AG04449 (cell line): ENCODE measurements at regions of chr17 and their contacts with region 1.

Region 1: DNA sequence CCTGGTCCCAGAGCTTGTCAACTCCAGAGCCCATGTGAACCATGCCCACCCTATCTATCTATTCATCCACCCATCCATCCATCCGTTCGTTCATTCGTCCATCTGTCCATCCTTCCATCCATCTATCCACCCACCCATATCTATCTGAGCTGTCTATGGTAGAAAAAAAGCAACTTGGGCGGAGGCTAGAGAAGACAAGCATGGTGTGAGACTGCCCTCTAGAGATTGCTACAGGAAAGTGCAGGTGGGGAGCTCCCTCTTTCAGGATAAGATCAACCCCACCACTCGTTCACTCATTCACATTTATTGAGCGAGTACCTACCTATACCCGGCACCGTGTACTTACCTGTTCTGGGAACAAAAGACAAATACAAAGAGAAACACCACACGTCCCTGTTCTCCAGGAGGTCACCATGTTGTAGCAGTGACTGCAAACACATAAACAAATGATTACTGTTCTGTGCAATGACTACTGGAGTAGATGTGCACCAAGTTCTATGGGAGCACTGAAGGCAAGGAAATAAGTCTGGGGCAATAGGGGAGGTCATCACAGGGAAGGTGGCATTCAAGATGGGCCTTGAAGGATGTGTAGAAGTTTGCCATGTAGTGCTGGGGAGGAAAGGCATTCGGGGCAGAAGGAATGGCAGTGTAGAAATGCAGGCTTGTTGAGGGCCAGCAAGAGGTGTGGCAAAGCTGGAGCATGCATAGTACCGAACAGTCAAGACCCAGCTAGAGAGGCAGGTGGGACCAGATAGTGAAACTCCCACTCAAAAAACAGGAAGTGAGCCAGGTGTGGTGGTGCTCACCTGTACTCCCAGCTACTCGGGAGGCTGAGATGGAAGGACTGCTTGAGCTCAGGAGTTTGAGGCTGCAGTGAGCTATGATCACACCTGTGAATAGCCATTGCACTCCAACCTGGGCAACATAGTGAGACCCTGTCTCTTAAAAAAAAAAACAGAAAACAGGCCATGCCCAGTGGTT is 13.4 kb upstream of the ATP5MC1 start:
- DNase-seq: no peak
- H3K4me3 ChIP-seq: no peak overlapping the region
- CTCF ChIP-seq: peak; percentile 85

Region 2: GRCh38 chr17:48636177-48637018 is 242.8 kb before region 1 on chr17:
- CTCF ChIA-PET with region 1: interaction called, 12 read pairs
- POLR2A ChIA-PET with region 1: no interaction called
- DNase-seq: no peak
- H3K4me3 ChIP-seq: no peak overlapping the region
- CTCF ChIP-seq: peak; percentile 81

Region 3: DNA sequence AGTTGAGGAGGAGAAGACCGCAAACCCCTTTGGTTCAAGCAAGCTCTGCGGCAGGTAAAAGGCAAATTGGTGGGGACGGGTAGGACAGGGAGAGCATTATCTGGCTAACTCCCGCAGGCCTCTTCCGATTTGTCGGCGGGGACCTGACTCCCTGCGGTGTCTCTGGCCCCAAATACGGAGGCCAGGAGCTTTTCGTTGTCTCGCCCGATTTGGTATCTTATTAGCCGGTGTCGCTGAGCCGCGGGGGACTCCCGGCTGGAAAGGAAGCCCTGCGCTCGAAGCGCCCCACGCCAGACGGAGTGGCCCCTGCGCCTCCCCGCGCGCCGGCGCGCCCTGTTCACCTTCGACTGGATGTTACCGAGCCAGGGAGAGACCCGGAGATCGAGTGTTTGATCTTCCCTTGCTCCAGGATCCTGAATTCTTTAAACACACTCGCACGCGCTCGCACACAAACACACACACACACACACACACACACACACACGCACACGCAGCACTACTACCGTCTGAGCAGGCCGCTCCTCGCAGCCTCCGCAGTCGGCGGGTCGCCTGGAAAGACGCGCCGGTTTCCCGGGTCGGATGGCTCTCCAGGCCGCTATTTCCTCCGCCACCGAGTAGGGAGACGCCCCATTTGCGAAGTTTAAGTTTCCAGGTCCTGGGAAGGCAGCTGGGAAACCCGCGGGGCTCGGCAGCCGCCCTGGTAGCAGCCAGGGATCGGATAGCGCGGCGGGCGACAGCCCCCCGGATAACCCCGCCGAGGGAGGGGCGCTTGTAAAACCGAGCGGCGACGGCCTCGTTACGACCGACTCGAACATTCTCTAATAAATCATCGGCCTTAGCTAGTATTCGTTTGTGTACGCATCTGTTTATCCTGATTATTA is 160.2 kb before region 1 on chr17:
- CTCF ChIA-PET with region 1: interaction called, 127 read pairs
- POLR2A ChIA-PET with region 1: no interaction called
- DNase-seq: no peak
- H3K4me3 ChIP-seq: peak overlapping the region; percentile 6; the same call in 1 of the 2 replicates
- CTCF ChIP-seq: no peak

Region 4: DNA sequence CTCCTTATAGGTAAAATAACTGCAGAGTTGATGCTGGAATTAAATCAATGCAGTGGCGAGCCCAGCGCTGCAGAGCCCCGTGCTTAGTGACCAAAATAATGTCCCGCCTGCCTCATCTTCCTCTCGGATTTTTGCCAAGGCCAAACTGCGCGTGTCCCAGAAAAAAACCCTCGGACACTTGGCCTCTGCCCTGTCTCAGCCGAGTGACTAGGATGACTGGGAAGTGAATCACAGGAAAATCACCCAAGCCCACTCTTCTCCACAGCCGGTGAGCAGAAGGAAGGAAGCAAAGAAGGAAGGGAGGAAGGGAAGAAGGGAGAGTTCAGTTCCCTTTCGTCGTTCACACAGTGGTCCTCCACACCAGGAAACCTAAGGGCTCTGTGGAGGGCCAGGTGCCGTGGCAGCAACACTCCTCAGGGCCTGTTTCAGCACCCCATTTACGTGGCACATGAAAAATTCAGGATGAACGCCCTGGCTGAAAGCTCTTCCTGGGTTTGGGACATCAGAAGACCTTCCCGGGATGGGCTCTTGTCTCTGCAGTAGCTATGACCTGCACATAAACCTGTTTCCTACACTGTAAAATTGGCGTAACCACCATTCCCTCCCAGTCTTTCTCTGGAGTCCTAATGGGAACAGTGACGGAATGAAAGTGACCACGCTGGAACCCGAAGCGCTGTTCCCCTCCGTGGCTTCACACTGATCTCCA is 125.3 kb before region 1 on chr17:
- CTCF ChIA-PET with region 1: no interaction called
- POLR2A ChIA-PET with region 1: no interaction called
- DNase-seq: no peak
- H3K4me3 ChIP-seq: no peak overlapping the region
- CTCF ChIP-seq: no peak

Region 5: DNA sequence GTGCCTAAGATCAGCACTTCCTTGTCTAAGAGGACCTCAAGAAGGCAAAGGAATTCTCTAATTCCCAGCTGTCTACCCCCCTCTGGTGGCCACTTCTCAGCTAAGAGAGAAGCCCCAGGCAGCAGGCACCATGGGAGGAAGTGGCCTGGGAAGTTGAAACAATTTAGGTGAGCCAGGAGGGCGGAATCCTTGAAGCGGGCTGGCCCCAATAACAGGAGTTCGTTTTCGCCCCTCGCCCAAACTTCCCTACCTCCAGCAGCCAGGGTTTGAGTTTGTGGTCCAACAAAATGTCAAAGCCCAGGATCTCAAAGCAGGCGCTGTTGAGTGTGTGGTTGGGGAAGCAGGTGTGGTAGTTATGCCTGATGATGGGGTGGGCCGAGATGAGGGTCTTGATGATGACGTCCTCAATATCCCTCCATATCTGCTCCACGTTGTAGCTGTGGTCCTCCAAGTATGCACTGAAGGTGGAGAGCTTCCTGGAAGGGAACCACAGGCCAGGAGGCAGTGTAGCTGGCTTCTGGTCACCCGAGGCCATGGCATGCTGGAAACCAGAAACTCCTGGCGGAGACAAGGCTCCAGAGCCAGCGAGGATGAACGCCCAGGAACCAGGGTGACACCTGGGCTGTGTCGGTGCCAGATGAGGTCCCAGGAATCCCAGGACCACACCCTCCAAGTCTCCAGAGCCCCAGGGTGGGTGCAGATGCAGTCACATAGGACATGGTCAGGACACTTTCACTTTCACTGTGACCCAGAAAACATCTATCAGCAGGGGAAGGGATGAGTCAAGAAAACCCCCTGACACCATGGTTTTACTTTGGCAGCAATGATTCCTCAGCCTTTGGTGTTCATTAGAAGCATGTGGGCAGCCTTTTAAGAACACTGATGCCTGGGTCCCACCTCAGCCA is 87.8 kb before region 1 on chr17:
- CTCF ChIA-PET with region 1: interaction called, 31 read pairs
- POLR2A ChIA-PET with region 1: no interaction called
- DNase-seq: peak; percentile 45
- H3K4me3 ChIP-seq: no peak overlapping the region
- CTCF ChIP-seq: peak; percentile 82

Region 6: DNA sequence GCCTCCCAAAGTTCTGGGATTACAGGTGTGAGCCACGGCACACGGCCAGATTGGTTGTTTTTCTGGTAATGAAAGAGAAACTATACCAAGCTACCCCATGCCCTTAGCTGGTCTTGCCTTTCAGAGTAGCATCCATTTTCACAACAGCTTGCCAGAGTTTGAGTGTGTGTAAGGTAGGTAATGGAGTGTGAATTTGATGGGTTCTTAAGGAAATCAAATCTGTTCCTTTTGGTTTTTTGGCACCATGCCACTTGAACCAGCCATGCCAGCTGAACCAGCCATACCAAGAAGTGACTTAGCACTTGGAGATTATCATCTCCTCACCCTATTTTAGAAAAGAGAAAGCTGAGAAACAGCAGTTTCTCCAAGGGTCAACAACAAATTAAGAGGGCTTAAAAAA is 43.2 kb before region 1 on chr17:
- CTCF ChIA-PET with region 1: interaction called, 18 read pairs
- POLR2A ChIA-PET with region 1: no interaction called
- DNase-seq: no peak
- H3K4me3 ChIP-seq: no peak overlapping the region
- CTCF ChIP-seq: no peak

Region 7: DNA sequence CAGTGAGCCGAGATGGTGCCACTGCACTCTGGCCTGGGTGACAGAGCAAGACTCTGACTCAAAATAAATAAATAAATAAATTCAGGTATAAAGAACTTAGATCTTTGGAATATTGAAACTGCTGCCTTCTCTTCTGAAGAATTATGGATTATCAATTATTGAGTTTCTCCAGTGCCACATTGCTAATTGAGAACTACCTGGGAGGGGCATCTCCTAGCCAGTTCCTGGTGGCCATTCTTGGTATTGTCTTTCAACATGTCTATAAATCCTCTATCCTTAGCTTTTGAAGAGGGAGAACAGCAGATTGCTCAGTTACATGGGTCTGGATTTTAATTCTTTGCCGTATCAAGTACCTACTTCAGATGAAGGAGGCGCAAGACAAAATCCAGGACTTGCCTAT is 19.2 kb before region 1 on chr17:
- CTCF ChIA-PET with region 1: interaction called, 30 read pairs
- POLR2A ChIA-PET with region 1: no interaction called
- DNase-seq: no peak
- H3K4me3 ChIP-seq: no peak overlapping the region
- CTCF ChIP-seq: no peak

Region 8: GRCh38 chr17:49038138-49038537 is 158.9 kb after region 1 on chr17:
- CTCF ChIA-PET with region 1: interaction called, 58 read pairs
- POLR2A ChIA-PET with region 1: no interaction called
- DNase-seq: no peak
- H3K4me3 ChIP-seq: no peak overlapping the region
- CTCF ChIP-seq: no peak

Region 9: DNA sequence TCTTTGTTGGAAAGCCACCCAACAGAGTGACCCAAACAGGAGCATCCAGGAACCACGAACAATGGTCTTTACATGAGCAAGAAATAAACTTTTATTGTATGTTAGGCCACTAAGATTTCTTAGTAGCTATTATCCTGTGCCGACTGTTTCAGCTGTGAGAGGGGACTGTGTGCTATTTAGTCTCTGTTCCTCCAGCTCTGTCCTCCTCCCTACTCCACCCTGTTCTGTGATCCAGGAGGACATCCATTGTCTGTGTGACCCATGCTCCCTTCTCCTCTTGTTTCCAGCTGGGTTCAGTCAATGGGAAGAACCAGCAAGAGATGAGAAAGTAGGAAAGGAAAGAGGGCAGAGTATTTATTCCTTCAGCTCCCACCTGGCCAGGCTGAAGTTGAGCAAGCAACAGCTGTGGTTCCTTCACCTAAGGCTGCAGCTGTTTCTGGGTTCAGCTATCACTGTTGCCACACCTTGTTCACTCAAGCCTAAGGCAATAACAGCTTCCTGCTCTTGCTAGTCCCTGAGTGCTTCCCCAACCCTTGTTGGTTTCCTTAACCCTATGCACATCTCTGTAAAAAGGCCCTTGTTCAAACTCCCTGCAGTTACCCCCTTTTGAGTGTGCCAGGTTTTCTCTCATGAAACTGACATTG is 238.5 kb after region 1 on chr17:
- CTCF ChIA-PET with region 1: no interaction called
- POLR2A ChIA-PET with region 1: no interaction called
- DNase-seq: no peak
- H3K4me3 ChIP-seq: no peak overlapping the region
- CTCF ChIP-seq: no peak